Posterior vena cava (tissue), 2 donors: ENCODE measurements at regions of chr4 and their contacts with region 1.

Region 1: GRCh38 chr4:91734682-91735081 is 569.1 kb upstream of the GRID2 start:
- DNase-seq: no peak

Region 2: DNA sequence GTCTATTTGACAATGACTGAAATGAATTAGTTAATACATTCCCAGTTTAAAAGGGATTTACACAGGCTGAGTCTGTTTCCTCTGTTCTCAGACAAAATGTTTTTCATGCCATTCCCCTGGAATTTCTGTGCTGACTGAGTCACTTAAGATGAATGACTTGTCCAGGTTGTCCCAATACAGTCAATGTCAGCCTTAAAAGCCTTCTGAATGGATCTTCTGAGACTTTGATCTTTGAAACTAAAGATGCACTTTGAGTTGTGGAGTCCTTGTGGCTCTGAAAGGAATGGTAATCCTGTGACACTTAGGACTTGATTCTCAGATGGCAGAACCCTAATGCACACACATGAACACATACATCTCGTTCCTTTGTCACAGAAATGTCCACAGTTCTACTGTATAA is 53.1 kb before region 1 on chr4:
- intact Hi-C with region 1: no loop called
- DNase-seq: no peak

Region 3: GRCh38 chr4:91764085-91764484 is 29.4 kb after region 1 on chr4:
- intact Hi-C with region 1: loop called in 1 of 2 experiments (anchors 1 kb)
- DNase-seq: no peak